Dorsolateral prefrontal cortex (tissue), 120 donors: ENCODE measurements at regions of chr12 and their contacts with region 1.

Region 1: GRCh38 chr12:1728824-1729223 is 38.0 kb downstream of the ADIPOR2 start:
- DNase-seq: no peak
- H3K4me3 ChIP-seq: no peak overlapping the region
- H3K27ac ChIP-seq: peak overlapping the region in 51 of 59 donors; percentile 14 to 89 (median 70)
- H3K27me3 ChIP-seq: no peaks in the 10 kb centered on the region
- CTCF ChIP-seq: no peak

Region 2: GRCh38 chr12:1769809-1770494 is 41.1 kb after region 1 on chr12:
- intact Hi-C with region 1: loop called in 1 of 2 experiments (anchors 5 kb)
- DNase-seq: no peak
- H3K4me3 ChIP-seq: no peak overlapping the region
- H3K27ac ChIP-seq: peak overlapping the region in 31 of 59 donors; percentile 4 to 98 (median 44)
- H3K27me3 ChIP-seq: no peaks in the 10 kb centered on the region
- CTCF ChIP-seq: no peak

Region 3: DNA sequence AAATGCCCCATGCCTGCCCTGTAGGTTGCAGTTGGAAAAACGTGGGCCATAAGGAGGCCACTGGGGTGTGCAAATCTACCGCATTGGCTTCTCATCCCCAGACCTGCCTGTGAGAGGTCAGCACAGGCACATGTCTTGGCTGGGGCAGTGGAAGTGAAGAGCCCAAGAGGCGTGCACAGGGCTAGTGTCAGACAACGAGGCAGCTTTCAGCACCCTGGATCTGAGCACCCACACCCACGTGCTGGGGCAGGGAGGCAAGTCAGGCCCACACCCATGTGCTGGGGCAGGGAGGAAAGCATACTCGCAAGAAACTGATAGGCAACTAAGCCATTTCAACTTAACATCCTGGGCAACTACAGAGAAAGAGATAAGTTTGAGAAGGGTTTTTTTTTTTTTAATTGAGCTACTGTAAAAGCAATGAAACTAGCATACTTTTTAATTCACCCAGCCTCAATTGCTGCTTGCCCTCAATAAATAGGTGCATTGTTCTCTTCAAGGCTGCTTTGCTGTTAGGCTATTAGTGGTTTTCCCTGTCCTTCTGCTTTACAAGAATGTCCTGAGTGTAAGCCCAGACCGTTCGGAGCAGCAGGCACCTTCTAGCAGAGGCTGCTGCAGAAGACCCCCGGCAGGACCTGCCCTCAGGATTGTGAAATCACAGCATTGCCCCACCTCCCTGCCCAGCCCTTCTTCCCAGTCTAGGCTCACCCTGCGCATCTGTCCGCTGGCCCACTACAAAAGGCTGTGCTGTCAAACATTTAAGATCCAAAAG is 710.7 kb after region 1 on chr12:
- intact Hi-C with region 1: no loop called
- DNase-seq: no peak
- H3K4me3 ChIP-seq: no peak overlapping the region
- H3K27ac ChIP-seq: peak overlapping the region in 1 of 59 donors; percentile 10
- H3K27me3 ChIP-seq: no peaks in the 10 kb centered on the region
- CTCF ChIP-seq: no peak